Activated CD4-positive, alpha-beta T cell treated with anti-CD3 and anti-CD28 coated beads for 36 hours (primary cell): ENCODE measurements at regions of chrX and their contacts with region 1.

Region 1: GRCh38 chrX:78123190-78123589 is 16.3 kb downstream of the TAF9B start:
- DNase-seq: peak; percentile 66
- ATAC-seq: peak; percentile 81
- H3K4me3 Mint-ChIP-seq: no peak overlapping the region
- H3K27ac Mint-ChIP-seq: peak overlapping the region; percentile 92
- H3K4me1 Mint-ChIP-seq: peaks cover 41% of the 10 kb centered on the region
- H3K27me3 Mint-ChIP-seq: no peaks in the 10 kb centered on the region

Region 2: GRCh38 chrX:78109458-78109857 is 13.7 kb before region 1 on chrX:
- CTCF ChIA-PET with region 1: no interaction called
- POLR2A ChIA-PET with region 1: no interaction called
- intact Hi-C with region 1: loop called (anchors 2 kb)
- DNase-seq: no peak
- ATAC-seq: no peak
- H3K4me3 Mint-ChIP-seq: peak overlapping the region; percentile 98
- H3K27ac Mint-ChIP-seq: peak overlapping the region; percentile 63
- H3K4me1 Mint-ChIP-seq: peaks cover 47% of the 10 kb centered on the region
- H3K27me3 Mint-ChIP-seq: no peaks in the 10 kb centered on the region

Region 3: GRCh38 chrX:78658845-78659744 is 535.9 kb after region 1 on chrX and contains the start of gene RTL3:
- CTCF ChIA-PET with region 1: no interaction called
- POLR2A ChIA-PET with region 1: no interaction called
- intact Hi-C with region 1: no loop called
- DNase-seq: no peak
- ATAC-seq: no peak
- H3K4me3 Mint-ChIP-seq: no peak within 1 kb of the TSS
- H3K27ac Mint-ChIP-seq: no peak within 1 kb of the TSS
- H3K4me1 Mint-ChIP-seq: peaks cover 5% of the 10 kb centered on the region
- H3K27me3 Mint-ChIP-seq: peaks cover 4% of the 10 kb centered on the region
- total RNA-seq, gene RTL3: not detected

Region 4: GRCh38 chrX:79096145-79096556 is 973.0 kb after region 1 on chrX:
- CTCF ChIA-PET with region 1: no interaction called
- POLR2A ChIA-PET with region 1: no interaction called
- intact Hi-C with region 1: no loop called
- DNase-seq: no peak
- ATAC-seq: peak; percentile 20
- H3K4me3 Mint-ChIP-seq: peak overlapping the region; percentile 46
- H3K27ac Mint-ChIP-seq: peak overlapping the region; percentile 83
- H3K4me1 Mint-ChIP-seq: peaks cover 61% of the 10 kb centered on the region
- H3K27me3 Mint-ChIP-seq: no peaks in the 10 kb centered on the region